GM10248 (cell line): ENCODE measurements at regions of chr11 and their contacts with region 1.

Region 1: DNA sequence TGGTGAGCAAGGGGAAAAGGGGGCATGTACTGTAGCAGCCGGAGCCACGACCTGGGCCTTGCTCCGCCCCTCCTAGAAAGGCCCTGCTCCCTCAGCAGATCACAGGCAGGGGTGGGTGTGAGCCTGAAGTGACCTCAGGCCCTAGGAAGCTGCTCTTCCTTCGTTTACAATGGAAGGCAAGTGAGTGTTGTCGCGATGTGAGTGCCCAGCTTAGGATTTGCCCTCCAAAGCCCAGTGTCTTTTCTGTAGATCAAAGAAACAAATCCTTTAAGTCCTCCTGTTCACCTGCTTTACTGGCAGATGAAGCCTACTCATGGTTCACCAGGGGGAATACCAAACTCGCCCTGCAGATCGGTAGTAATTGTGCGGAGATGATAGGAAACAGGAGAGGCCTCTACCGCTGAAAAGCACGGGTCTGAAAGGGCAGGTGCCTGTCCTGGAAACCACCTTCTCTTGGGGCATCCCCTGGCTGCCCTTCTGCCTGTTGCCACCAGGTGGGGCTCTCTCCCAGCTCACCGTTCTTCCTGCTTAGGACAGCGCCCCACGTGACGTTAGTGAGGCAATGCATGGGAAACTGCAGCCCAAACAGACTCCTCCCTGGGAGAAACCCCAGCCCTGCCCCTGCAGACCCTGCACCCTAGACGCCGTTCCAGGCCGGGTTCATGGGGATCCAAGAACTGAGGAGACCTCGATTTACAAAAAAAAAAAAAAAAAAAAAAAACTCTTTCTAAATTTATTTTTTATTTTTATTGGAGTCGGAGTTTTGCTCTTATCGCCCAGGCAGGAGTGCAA is 45.9 kb upstream of the RAB1B start:
- DNase-seq: peak; percentile 94
- CTCF ChIP-seq: peak; percentile 100

Region 2: DNA sequence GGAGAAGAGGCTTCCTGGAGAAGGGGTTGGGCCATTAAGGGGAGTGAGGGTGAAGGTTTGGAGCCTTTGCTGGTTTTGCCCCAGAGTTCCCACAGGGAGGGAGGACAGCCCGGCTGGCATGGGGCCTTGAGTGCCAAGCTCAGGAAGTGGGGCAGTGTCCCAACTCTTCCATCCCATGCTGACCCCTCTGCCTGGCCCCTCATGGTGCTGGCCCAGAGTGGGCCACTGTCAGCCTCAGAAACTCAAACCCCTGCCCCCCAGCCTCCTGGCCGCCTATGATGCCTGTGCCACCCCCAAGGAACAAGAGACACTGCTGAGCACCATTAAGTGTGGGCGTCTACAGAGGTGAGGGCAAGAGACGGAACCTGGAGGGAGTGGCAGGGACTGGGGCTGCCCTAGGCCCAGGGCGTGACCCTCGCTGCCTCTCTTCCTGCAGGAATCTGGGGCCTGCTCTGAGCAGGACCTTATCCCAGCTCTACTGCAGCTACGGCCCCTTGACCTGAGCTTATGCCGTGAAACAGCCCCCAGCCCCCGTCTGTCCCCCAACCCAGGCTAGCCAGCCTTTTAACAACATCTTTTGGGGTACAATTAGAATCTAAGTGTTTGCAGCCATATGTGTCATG is 356.9 kb before region 1 on chr11:
- CTCF ChIA-PET with region 1: no interaction called
- POLR2A ChIA-PET with region 1: no interaction called
- DNase-seq: no peak
- CTCF ChIP-seq: no peak

Region 3: DNA sequence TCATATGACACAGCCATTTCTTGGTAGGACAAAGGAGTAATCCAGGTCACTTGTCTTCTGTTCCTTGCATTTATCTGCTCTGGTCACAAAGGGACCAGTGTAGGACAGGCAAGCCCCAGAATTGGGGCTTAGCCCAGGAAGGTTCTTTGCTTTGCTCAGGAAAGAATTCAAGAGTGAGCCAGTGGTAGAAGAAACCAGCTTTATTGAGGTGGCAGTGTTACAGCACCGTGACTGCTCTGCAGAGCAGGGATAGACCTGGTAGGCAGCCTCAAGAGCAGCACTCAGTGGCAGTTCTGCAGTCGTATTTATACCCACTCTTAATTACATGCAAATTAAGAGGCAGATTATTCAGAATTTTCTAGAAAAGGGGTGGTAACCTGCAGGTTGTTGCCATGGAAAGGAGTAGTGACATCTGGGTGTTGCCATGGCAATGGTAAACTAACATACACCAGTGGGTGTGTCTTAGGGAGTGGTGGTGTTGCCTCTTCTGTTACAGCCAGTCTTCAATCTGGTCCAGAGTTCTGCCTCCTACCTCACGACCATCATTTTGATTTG is 39.0 kb before region 1 on chr11:
- CTCF ChIA-PET with region 1: interaction called, 18 read pairs
- POLR2A ChIA-PET with region 1: no interaction called
- DNase-seq: no peak
- CTCF ChIP-seq: no peak

Region 4: GRCh38 chr11:66211100-66211499 is 11.5 kb before region 1 on chr11:
- CTCF ChIA-PET with region 1: interaction called, 10 read pairs
- POLR2A ChIA-PET with region 1: no interaction called
- DNase-seq: no peak
- CTCF ChIP-seq: no peak

Region 5: GRCh38 chr11:66251809-66252208 is 29.3 kb after region 1 on chr11:
- CTCF ChIA-PET with region 1: interaction called, 18 read pairs
- POLR2A ChIA-PET with region 1: no interaction called
- DNase-seq: no peak
- CTCF ChIP-seq: no peak

Region 6: DNA sequence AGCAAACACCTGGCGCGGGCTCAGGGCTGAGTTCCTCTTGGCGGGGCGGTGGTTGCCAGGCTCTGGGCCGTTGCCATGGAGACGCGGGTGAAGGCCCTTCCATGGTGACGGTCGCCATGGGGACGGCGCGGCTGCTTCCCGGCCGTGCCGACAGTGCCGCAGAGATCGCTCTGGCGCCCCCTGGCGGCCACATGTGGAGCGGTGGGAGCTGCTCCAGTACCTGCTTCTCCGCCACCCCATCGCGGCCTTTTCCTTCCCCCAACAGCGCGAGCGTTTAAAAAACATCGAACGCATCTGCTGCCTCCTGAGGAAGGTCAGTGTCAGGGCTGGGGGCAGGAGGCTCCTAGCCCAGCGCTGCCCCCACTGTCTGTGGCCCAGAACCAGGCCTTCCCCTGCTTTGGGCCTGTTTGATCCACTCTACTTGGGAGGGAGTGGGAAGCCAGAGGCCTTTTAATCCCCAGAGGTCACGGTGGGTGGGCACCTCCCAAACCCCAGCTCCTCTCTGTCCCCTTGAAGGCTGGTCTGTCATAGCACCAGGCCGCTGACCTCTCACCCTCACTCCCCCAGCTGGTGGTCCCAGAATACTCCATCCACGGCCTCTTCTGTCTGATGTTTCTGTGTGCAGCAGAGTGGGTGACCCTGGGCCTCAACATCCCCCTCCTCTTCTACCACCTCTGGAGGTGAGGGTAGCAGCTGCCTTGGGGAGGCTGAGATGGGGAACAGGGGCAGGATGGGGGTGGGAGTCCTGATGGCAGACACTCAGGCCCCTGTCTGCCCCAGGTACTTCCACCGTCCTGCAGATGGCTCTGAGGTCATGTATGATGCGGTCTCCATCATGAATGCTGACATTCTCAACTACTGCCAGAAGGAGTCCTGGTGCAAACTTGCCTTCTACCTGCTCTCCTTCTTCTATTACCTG is 60.2 kb after region 1 on chr11:
- CTCF ChIA-PET with region 1: interaction called, 92 read pairs
- POLR2A ChIA-PET with region 1: no interaction called
- DNase-seq: peak; percentile 99
- CTCF ChIP-seq: peak; percentile 98